T-cell (primary cell): ENCODE measurements at regions of chr14 and their contacts with region 1.

Region 1: DNA sequence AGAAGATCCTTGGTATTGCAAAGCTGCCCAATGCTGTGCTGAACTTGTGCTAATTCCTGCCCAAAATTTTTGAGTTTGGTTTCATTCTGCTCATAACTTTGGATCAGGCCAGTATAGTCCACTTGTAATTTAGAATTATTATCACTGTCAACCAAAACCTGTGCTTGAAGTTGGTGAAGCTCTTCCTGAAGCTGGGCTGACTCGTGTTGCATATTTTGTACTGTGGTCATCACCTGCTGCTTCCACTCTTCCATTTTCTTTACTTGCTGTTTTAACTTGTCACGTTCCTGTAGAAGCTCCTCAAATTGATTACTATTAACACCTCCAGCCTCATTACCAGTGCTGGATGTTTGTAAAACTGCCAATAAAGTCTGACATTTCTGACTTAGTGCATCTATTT is 35.8 kb downstream of the TRIP11 start:
- DNase-seq: no peak
- ATAC-seq: no peak
- H3K4me3 ChIP-seq: no peak overlapping the region
- H3K4me3 Mint-ChIP-seq: peak overlapping the region in 1 of 3 donors; percentile 64
- H3K27ac ChIP-seq: no peak overlapping the region
- H3K27ac Mint-ChIP-seq: peak overlapping the region; percentile 91 to 93
- H3K4me1 ChIP-seq: peaks cover 3 to 19% of the 10 kb centered on the region in 2 experiments
- H3K4me1 Mint-ChIP-seq: peaks cover 44 to 52% (median 49%) of the 10 kb centered on the region in 3 donors
- H3K27me3 ChIP-seq: no peaks in the 10 kb centered on the region
- H3K27me3 Mint-ChIP-seq: no peaks in the 10 kb centered on the region

Region 2: DNA sequence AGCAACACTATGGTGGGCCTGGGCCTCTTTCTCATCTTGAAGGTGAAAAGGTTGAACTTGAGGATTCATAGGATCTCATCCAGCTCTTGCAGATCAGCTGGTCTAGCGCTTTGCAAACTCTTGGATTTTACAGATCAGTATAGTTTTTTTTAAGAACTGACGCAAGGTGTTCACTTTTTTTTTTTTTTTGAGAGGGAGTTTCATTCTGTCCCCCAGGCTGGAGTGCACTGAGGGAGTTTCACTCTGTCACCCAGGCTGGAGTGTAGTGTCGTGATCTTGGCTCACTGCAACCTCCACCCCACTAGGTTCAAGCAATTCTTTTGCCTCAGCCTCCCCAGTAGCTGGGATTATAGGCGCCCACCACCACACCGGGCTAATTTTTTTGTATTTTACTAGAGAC is 764.7 kb after region 1 on chr14:
- CTCF ChIA-PET with region 1: interaction called in 1 of 2 experiments, 11 read pairs
- POLR2A ChIA-PET with region 1: no interaction called
- DNase-seq: no peak
- ATAC-seq: no peak
- H3K4me3 ChIP-seq: no peak overlapping the region
- H3K4me3 Mint-ChIP-seq: no peak overlapping the region
- H3K27ac ChIP-seq: peak overlapping the region; percentile 18
- H3K27ac Mint-ChIP-seq: no peak overlapping the region
- H3K4me1 ChIP-seq: no peaks in the 10 kb centered on the region
- H3K4me1 Mint-ChIP-seq: peaks cover 0 to 15% (median 0%) of the 10 kb centered on the region in 3 donors
- H3K27me3 ChIP-seq: peaks cover 0 to 4% of the 10 kb centered on the region in 2 experiments
- H3K27me3 Mint-ChIP-seq: no peaks in the 10 kb centered on the region